Mucosa of descending colon (tissue), 3 donors: ENCODE measurements at regions of chr6 and their contacts with region 1.

Region 1: GRCh38 chr6:108113557-108114519 is 39.3 kb upstream of the OSTM1 start:
- DNase-seq: peak in 2 of 3 donors; percentile 33 to 50
- ATAC-seq: peak; percentile 6
- H3K4me3 ChIP-seq: no peak overlapping the region
- H3K4me1 ChIP-seq: peaks cover 38% of the 10 kb centered on the region
- CTCF ChIP-seq: no peak

Region 2: DNA sequence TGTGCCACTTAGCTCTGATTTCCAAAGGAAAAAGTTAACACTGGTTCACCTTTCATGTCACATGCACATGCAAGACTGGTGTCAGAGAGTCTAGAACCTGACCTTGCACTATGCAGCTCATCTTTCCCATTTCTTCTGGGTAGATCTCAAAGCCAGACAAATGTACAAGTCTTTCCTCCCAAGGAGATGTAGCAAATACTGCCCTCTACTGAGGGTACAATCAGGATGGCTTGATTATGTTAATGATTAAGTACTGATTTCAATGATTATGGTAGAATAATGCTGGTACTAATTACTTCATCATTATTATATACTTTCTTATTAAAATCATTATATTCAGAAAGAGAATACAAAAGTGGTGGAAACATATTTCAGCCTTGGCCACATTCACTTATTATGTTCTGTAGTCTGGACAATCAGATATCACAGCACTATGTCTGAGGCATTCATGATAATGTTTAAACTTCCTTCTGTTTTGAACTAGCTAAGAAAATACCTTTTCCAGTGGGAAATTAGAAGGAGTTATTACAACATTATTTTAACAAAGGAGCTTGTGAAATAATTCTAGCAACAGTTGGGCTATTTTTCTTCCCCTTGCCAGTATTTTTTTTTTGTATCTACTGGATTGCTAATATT is 378.4 kb after region 1 on chr6:
- intact Hi-C with region 1: loop called in 1 of 2 experiments (anchors 10 kb)
- DNase-seq: peak in 1 of 3 donors; percentile 15
- ATAC-seq: peak; percentile 48
- H3K4me3 ChIP-seq: no peak overlapping the region
- H3K4me1 ChIP-seq: no peaks in the 10 kb centered on the region
- CTCF ChIP-seq: no peak

Region 3: DNA sequence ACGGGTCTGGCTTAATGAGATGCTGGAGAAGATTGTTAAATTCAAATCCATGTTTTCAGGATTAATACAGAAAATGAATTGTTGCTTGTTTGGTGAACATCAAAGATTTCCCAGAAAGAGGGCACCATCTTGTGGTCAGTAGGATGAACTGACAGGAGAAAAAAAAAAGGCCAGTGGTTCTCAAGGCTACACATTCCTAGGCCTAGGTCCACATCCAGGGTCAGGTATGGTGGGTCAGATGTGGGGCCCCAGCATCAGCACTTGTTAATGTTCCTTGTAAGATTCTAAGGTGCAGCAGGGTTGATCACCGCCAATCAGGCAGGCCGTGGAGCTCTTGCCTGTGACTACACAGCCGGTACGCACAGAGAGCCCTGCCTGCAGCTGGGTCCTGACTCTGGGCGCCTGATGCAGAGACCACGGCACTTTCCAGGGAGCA is 412.9 kb after region 1 on chr6:
- intact Hi-C with region 1: loop called (anchors 5 to 10 kb)
- DNase-seq: no peak
- ATAC-seq: peak; percentile 56
- H3K4me3 ChIP-seq: no peak overlapping the region
- H3K4me1 ChIP-seq: no peaks in the 10 kb centered on the region
- CTCF ChIP-seq: peak; percentile 66